ENCODE measurements at regions of chr5 and their contacts with region 1.

Region 1: GRCh38 chr5:139273572-139274289 is 19.8 kb upstream of the MATR3 start:
- DNase-seq: peak; percentile 86 to 90
- ATAC-seq: peak; percentile 79 to 83
- H3K4me3 ChIP-seq: peak overlapping the region; percentile 71 to 91 (median 76)
- H3K27ac ChIP-seq: peak overlapping the region; percentile 92 to 98 (median 97)
- H3K4me1 ChIP-seq: peaks cover 68 to 70% of the 10 kb centered on the region in 2 donors
- H3K27me3 ChIP-seq: no peaks in the 10 kb centered on the region
- CTCF ChIP-seq: peak in 4 of 5 experiments; percentile 20 to 51 (median 22)
- POLR2A ChIP-seq: peak; percentile 87 to 89

Region 2: GRCh38 chr5:139061274-139061673 is 212.5 kb before region 1 on chr5:
- in situ Hi-C with region 1: no loop called
- intact Hi-C with region 1: no loop called
- DNase-seq: peak; percentile 13 to 46
- ATAC-seq: peak; percentile 13 to 23
- H3K4me3 ChIP-seq: no peak overlapping the region
- H3K27ac ChIP-seq: peak overlapping the region in 2 of 4 donors; percentile 7 to 9
- H3K4me1 ChIP-seq: peaks cover 47 to 54% of the 10 kb centered on the region in 2 donors
- H3K27me3 ChIP-seq: no peaks in the 10 kb centered on the region
- CTCF ChIP-seq: no peak
- POLR2A ChIP-seq: no peak

Region 3: GRCh38 chr5:139131465-139131864 is 142.3 kb before region 1 on chr5:
- in situ Hi-C with region 1: no loop called
- intact Hi-C with region 1: loop called (anchors 5 kb)
- DNase-seq: peak; percentile 21 to 66
- ATAC-seq: peak; percentile 88 to 91
- H3K4me3 ChIP-seq: peak overlapping the region; percentile 19 to 47 (median 27)
- H3K27ac ChIP-seq: peak overlapping the region; percentile 85 to 92 (median 88)
- H3K4me1 ChIP-seq: peaks cover 59 to 71% of the 10 kb centered on the region in 2 donors
- H3K27me3 ChIP-seq: no peaks in the 10 kb centered on the region
- CTCF ChIP-seq: no peak
- POLR2A ChIP-seq: no peak

Region 4: DNA sequence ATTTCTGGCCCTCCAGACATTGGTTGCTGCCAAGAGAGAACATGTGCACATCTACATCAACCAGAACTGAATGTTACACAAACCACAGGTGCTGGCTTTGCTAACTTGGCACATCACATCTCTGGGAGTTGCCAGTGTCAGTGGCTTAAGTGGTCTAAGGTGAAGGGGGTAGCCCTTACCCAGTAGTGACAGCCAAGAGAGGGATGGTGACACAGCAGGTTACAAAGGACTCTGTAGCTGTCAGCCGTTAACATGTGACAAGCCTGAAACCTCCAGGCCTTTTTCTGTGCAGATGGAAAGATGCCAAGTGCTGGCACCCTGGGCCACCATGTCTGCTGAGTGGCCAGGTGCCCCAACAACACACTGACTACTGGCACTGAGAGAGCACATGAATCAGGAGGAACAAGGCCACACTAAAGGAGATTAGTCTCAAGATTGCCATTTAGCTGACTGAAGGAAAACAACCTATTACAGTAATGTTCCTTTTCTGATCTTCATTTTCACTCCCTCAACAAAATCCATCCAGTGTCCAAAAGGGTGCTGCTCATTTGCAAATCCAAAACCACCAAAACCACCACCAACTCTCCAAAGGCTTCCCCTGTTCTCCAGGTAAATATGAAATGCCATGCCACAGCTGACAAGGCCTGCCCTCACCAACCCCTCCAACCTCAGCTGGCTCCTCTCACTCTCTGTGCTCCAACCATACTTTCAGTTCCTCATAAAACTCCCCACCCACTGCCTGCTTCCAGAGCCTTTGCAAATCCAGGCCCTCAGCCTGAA is 95.7 kb before region 1 on chr5:
- in situ Hi-C with region 1: no loop called
- intact Hi-C with region 1: loop called (anchors 5 kb)
- DNase-seq: peak; percentile 92 to 98
- ATAC-seq: peak; percentile 89
- H3K4me3 ChIP-seq: no peak overlapping the region
- H3K27ac ChIP-seq: peak overlapping the region; percentile 91 to 96 (median 93)
- H3K4me1 ChIP-seq: peaks cover 56 to 57% of the 10 kb centered on the region in 2 donors
- H3K27me3 ChIP-seq: no peaks in the 10 kb centered on the region
- CTCF ChIP-seq: no peak
- POLR2A ChIP-seq: peak in 1 of 2 donors; percentile 23

Region 5: DNA sequence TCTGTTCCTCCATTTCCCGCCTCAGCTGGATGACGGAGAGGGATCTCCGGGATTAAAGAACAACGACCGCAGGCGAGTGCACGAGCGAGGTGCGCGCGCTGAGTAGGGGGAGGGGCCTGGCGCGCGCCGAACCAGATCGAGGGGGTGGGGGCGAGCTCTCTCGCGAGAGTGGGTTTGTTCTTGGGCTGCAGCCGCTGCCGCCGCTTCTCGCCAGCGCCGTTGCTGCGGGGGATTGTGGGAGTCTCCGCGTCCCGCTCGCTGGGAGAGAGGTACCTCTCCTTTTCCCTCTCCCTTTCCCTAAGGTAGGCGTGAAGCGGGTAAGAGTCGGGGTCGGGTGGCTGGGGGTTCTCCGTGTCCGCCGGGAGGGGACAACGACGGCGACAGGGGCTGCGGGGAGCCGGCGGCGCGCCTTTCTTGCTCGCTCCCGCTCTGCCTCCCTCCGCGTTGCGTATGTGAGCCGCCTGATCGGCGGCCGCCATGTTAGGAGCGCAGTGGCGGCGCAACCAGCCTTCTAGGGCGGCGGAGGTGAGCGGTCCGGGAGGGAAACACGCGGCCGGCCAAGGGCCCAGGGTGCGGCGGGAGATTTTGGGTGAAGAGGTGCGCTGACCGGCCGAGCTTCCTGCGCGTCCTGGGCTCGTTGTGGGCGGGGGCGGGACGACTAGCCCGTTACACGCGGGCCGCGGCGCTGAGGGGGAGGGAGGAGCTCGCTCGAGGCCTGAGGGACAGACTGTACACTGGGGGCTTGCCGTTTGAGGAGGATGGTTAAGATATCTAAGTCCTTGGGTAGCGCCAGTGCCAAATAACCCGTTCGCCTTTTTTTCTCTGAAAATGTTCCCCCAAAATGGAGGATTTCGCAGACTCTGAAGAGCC is 20.0 kb after region 1 on chr5 and contains the start of gene MATR3:
- in situ Hi-C with region 1: no loop called
- intact Hi-C with region 1: loop called (anchors 1 kb)
- DNase-seq: peak; percentile 92 to 96
- ATAC-seq: peak; percentile 86 to 90
- H3K4me3 ChIP-seq: peak within 1 kb of the TSS; percentile 82 to 97 (median 86)
- H3K27ac ChIP-seq: peak within 1 kb of the TSS; percentile 93 to 100 (median 99)
- H3K4me1 ChIP-seq: peaks cover 42 to 43% of the 10 kb centered on the region in 2 donors
- H3K27me3 ChIP-seq: no peaks in the 10 kb centered on the region
- CTCF ChIP-seq: no peak
- POLR2A ChIP-seq: peak; percentile 98 to 99
- total RNA-seq, gene MATR3: 115 to 188 (median 156) TPM

Measured in gastrocnemius medialis (tissue), 4 donors.